ENCODE measurements at regions of chr5 and their contacts with region 1.

Region 1: GRCh38 chr5:94849821-94850736 is 231.6 kb downstream of the SLF1 start:
- DNase-seq: peak; percentile 44 to 54 (median 47)
- H3K4me3 ChIP-seq: no peak overlapping the region
- H3K4me3 Mint-ChIP-seq: no peak overlapping the region
- H3K27ac ChIP-seq: no peak overlapping the region
- H3K27ac Mint-ChIP-seq: no peak overlapping the region
- H3K4me1 ChIP-seq: no peaks in the 10 kb centered on the region
- H3K4me1 Mint-ChIP-seq: peaks cover 0 to 5% (median 1%) of the 10 kb centered on the region in 4 donors
- H3K27me3 ChIP-seq: no peaks in the 10 kb centered on the region
- H3K27me3 Mint-ChIP-seq: peaks cover 0 to 2% of the 10 kb centered on the region in 2 donors

Region 2: DNA sequence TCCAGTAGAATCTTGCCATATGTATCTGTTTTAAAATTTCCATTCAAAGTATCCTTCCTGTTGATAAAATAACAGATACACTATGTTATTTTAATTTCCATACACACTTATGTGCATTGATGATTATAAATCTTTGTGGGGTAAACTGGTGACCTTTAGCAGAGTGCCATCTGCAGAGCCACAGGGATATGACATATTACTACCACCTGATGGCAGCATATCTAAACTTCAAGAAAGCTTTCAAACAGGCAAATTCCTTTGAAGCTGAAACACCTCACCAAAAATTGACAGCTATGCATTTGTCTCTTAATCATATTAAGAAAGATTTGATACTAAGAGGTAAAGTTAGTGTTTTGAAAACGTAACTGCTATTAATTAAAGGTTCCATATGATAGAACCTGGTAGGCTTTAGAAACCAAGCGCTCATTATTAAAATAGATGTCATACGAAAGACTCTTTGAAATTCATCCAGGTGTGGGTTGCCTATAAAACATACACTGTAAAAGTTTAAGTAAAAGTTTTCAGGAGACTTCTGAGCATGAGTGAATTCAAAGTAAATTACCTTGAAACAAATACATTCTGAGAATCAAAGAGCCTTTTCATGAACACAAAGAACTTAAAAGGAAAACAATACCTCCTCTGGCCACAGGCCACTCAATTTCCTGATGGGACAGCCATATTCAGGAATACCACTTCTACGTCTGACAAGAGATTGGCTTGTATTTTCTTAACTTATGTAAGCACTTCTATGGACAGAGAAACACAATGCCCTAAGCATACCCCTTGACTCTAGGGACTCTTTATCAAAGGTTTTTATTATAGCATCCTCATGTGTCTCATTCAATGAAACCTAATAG is 325.0 kb before region 1 on chr5:
- CTCF ChIA-PET with region 1: interaction called, 13 read pairs
- POLR2A ChIA-PET with region 1: no interaction called
- intact Hi-C with region 1: loop called (anchors 1 kb)
- DNase-seq: peak in 4 of 5 donors; percentile 43 to 54 (median 48)
- H3K4me3 ChIP-seq: no peak overlapping the region
- H3K4me3 Mint-ChIP-seq: no peak overlapping the region
- H3K27ac ChIP-seq: no peak overlapping the region
- H3K27ac Mint-ChIP-seq: no peak overlapping the region
- H3K4me1 ChIP-seq: no peaks in the 10 kb centered on the region
- H3K4me1 Mint-ChIP-seq: peaks cover 0 to 2% (median 0%) of the 10 kb centered on the region in 4 donors
- H3K27me3 ChIP-seq: no peaks in the 10 kb centered on the region
- H3K27me3 Mint-ChIP-seq: no peaks in the 10 kb centered on the region

Region 3: GRCh38 chr5:94562327-94562971 is 287.6 kb before region 1 on chr5:
- CTCF ChIA-PET with region 1: no interaction called
- POLR2A ChIA-PET with region 1: no interaction called
- intact Hi-C with region 1: no loop called
- DNase-seq: no peak
- H3K4me3 ChIP-seq: no peak overlapping the region
- H3K4me3 Mint-ChIP-seq: no peak overlapping the region
- H3K27ac ChIP-seq: no peak overlapping the region
- H3K27ac Mint-ChIP-seq: no peak overlapping the region
- H3K4me1 ChIP-seq: no peaks in the 10 kb centered on the region
- H3K4me1 Mint-ChIP-seq: peaks cover 0 to 7% (median under 1%) of the 10 kb centered on the region in 4 donors
- H3K27me3 ChIP-seq: no peaks in the 10 kb centered on the region
- H3K27me3 Mint-ChIP-seq: no peaks in the 10 kb centered on the region

Region 4: DNA sequence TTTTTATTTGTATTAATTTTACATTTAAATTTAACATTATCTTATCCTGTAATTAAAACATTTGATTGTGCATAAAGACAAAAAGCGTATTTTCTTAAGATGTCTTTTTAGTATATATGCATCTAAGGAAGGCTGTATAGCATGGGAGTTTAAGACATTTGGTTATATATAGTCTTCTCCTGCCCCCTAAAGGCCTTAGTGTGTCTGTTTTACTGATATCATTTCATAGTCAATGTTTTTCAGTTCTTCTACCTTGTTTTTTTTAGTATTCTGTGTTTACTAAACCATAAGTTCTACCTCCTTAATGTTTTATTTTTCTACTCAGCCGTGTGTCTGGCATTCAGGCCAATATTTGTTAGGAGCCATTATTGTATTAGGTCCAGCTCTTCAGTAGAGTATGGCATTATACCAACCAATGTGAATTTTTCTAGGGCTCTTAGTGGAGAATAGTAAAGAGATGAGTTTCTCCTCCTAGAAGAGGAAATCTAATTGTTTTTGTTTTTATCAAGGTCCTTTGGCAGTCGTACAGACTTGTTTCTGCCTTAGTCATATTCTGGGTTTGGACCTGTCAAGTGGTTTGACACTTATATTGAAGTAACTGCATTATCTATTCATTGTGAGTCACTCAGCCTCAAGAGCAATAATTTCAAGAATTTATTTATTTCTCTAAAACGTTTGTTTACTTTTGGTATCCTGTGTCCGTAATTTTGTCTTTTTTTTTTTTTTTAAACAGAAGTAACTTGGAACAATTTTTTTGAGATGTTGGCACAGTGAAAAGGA is 156.8 kb before region 1 on chr5:
- CTCF ChIA-PET with region 1: no interaction called
- POLR2A ChIA-PET with region 1: no interaction called
- intact Hi-C with region 1: loop called (anchors 5 kb)
- DNase-seq: peak in 4 of 5 donors; percentile 27 to 46 (median 38)
- H3K4me3 ChIP-seq: no peak overlapping the region
- H3K4me3 Mint-ChIP-seq: no peak overlapping the region
- H3K27ac ChIP-seq: no peak overlapping the region
- H3K27ac Mint-ChIP-seq: peak overlapping the region in 2 of 7 donors; percentile 16 to 38
- H3K4me1 ChIP-seq: no peaks in the 10 kb centered on the region
- H3K4me1 Mint-ChIP-seq: peaks cover 0 to 8% (median 2%) of the 10 kb centered on the region in 4 donors
- H3K27me3 ChIP-seq: no peaks in the 10 kb centered on the region
- H3K27me3 Mint-ChIP-seq: no peaks in the 10 kb centered on the region

Region 5: GRCh38 chr5:94740286-94740685 is 109.8 kb before region 1 on chr5:
- CTCF ChIA-PET with region 1: interaction called, 11 read pairs
- POLR2A ChIA-PET with region 1: no interaction called
- intact Hi-C with region 1: loop called (anchors 1 kb)
- DNase-seq: no peak
- H3K4me3 ChIP-seq: no peak overlapping the region
- H3K4me3 Mint-ChIP-seq: no peak overlapping the region
- H3K27ac ChIP-seq: no peak overlapping the region
- H3K27ac Mint-ChIP-seq: no peak overlapping the region
- H3K4me1 ChIP-seq: no peaks in the 10 kb centered on the region
- H3K4me1 Mint-ChIP-seq: no peaks in the 10 kb centered on the region
- H3K27me3 ChIP-seq: no peaks in the 10 kb centered on the region
- H3K27me3 Mint-ChIP-seq: peaks cover 0 to 3% of the 10 kb centered on the region in 2 donors

Region 6: GRCh38 chr5:94793113-94793815 is 56.8 kb before region 1 on chr5:
- CTCF ChIA-PET with region 1: interaction called, 4 read pairs
- POLR2A ChIA-PET with region 1: no interaction called
- intact Hi-C with region 1: loop called (anchors 5 kb)
- DNase-seq: peak; percentile 29 to 58 (median 54)
- H3K4me3 ChIP-seq: peak overlapping the region in 1 of 2 donors; percentile 15
- H3K4me3 Mint-ChIP-seq: peak overlapping the region; percentile 21 to 66 (median 38)
- H3K27ac ChIP-seq: peak overlapping the region; percentile 30
- H3K27ac Mint-ChIP-seq: peak overlapping the region; percentile 85 to 95 (median 90)
- H3K4me1 ChIP-seq: peaks cover 32% of the 10 kb centered on the region
- H3K4me1 Mint-ChIP-seq: peaks cover 29 to 47% (median 34%) of the 10 kb centered on the region in 4 donors
- H3K27me3 ChIP-seq: no peaks in the 10 kb centered on the region
- H3K27me3 Mint-ChIP-seq: no peaks in the 10 kb centered on the region